BJ (cell line): ENCODE measurements at regions of chr18 and their contacts with region 1.

Region 1: DNA sequence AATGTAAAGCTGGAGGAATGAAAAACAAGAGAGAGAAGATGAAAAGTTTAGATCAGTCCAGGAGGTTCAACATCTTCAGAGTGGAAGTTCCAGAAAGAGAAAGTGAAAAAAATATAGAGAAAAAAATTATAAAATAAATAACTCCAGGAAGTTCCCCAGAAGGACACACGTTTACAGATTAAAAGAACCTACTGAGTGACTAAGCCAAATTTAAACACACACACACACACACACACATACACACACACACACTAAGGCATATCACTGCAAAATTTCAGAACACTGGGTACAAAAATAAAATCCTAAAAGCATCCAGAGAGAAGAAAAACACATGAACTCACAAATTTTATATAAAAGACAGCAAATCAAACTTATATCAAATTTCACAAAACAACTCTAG is 85.9 kb upstream of the PMAIP1 start:
- DNase-seq: no peak
- H3K4me3 ChIP-seq: no peak overlapping the region
- H3K27me3 ChIP-seq: no peaks in the 10 kb centered on the region
- CTCF ChIP-seq: no peak

Region 2: DNA sequence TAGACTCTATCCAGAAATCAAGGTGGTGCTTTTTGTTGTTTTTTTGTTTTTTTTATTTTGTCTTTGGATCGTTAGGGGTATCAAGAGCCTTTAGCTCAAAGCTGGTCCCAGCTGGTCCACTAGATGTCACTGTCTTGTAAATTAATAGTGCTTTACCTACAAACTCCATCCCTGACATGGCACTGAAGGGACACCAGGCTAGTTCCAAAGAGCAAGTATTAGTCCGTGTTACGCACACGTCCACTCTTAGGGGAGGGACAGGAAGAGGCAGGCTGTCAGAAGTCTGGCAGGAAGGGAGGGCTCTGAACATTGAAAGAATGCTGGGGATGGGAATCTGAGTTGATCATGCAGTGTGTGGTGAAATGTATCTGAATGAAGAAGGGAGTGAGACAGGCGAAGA is 30.8 kb before region 1 on chr18:
- CTCF ChIA-PET with region 1: interaction called, 10 read pairs
- POLR2A ChIA-PET with region 1: no interaction called
- DNase-seq: no peak
- H3K4me3 ChIP-seq: no peak overlapping the region
- H3K27me3 ChIP-seq: no peaks in the 10 kb centered on the region
- CTCF ChIP-seq: peak; percentile 69

Region 3: GRCh38 chr18:59881728-59882656 is 68.0 kb after region 1 on chr18:
- CTCF ChIA-PET with region 1: no interaction called
- POLR2A ChIA-PET with region 1: interaction called, 10 read pairs
- DNase-seq: no peak
- H3K4me3 ChIP-seq: no peak overlapping the region
- H3K27me3 ChIP-seq: no peaks in the 10 kb centered on the region
- CTCF ChIP-seq: no peak